Activated CD4-positive, alpha-beta memory T cell treated with anti-CD3 and anti-CD28 coated beads, Interleukin-2, amount 10 ng/mL, durations not matched to agents 7 days and 5 days (primary cell): ENCODE measurements at regions of chr1 and their contacts with region 1.

Region 1: GRCh38 chr1:37859507-37860345 is at the start of gene MTF1:
- DNase-seq: peak; percentile 97
- H3K4me3 Mint-ChIP-seq: peak within 1 kb of the TSS; percentile 100
- H3K27ac Mint-ChIP-seq: peak within 1 kb of the TSS; percentile 99
- H3K4me1 Mint-ChIP-seq: peaks cover 45% of the 10 kb centered on the region
- H3K27me3 Mint-ChIP-seq: no peaks in the 10 kb centered on the region
- total RNA-seq, gene MTF1: 27.5 to 28.8 TPM

Region 2: DNA sequence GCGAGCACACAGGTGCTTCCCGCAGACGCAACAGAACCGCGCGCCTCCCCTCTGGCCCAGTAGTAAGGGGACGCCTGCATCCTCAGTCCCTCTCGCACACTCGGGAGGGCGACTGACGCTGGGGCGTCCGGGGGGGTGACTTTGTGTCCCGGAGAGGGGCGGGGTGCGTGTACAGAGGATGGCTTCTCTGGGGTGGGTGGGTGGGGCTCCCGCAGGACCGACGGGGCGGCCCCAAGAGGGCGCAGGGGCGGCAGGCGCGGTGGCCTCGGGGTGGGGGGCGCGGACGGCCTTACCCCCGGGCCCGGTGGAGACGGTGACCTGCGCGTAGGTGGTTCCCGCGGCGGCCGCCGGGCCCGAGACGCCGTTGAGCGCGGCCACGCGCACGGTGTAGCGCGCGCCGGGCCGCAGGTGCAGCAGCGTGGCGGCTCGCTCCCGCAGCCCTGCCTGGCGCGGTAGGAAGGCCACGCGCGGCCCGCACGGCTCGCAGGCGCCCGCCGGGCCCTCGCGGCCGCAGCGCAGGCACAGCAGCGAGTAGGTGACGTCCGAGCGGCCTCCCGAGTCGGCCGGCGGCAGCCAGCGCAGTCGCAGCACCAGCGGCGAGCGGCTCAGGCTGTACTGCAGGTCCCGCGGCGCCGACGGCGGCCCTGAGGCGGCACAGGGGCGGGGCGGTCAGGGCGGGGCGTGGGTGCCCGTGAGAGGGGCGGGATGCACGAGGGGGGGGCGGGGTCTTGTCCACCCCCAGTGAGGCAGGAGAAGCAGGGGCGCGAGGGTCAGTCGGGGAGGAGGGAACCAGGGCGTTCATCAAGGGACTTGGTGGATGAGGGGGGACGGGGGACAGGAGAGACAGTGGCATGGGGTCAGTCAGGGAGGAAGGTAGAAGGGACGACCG is 106.9 kb before region 1 on chr1:
- CTCF ChIA-PET with region 1: no interaction called
- POLR2A ChIA-PET with region 1: no interaction called
- DNase-seq: peak; percentile 29
- H3K4me3 Mint-ChIP-seq: peak overlapping the region; percentile 53
- H3K27ac Mint-ChIP-seq: no peak overlapping the region
- H3K4me1 Mint-ChIP-seq: peaks cover 12% of the 10 kb centered on the region
- H3K27me3 Mint-ChIP-seq: peaks cover 52% of the 10 kb centered on the region

Region 3: GRCh38 chr1:37776946-37777516 is 82.7 kb before region 1 on chr1:
- CTCF ChIA-PET with region 1: no interaction called
- POLR2A ChIA-PET with region 1: no interaction called
- DNase-seq: no peak
- H3K4me3 Mint-ChIP-seq: no peak overlapping the region
- H3K27ac Mint-ChIP-seq: no peak overlapping the region
- H3K4me1 Mint-ChIP-seq: no peaks in the 10 kb centered on the region
- H3K27me3 Mint-ChIP-seq: peaks cover 11% of the 10 kb centered on the region

Region 4: GRCh38 chr1:37828410-37829074 is 31.2 kb before region 1 on chr1:
- CTCF ChIA-PET with region 1: interaction called, 10 read pairs
- POLR2A ChIA-PET with region 1: no interaction called
- DNase-seq: no peak
- H3K4me3 Mint-ChIP-seq: no peak overlapping the region
- H3K27ac Mint-ChIP-seq: no peak overlapping the region
- H3K4me1 Mint-ChIP-seq: peaks cover 10% of the 10 kb centered on the region
- H3K27me3 Mint-ChIP-seq: no peaks in the 10 kb centered on the region

Region 5: GRCh38 chr1:37931361-37932158 is 71.8 kb after region 1 on chr1:
- CTCF ChIA-PET with region 1: interaction called, 15 read pairs
- POLR2A ChIA-PET with region 1: no interaction called
- DNase-seq: peak; percentile 98
- H3K4me3 Mint-ChIP-seq: peak overlapping the region; percentile 94
- H3K27ac Mint-ChIP-seq: peak overlapping the region; percentile 57
- H3K4me1 Mint-ChIP-seq: peaks cover 30% of the 10 kb centered on the region
- H3K27me3 Mint-ChIP-seq: no peaks in the 10 kb centered on the region